B cell (primary cell): ENCODE measurements at regions of chr5 and their contacts with region 1.

Region 1: DNA sequence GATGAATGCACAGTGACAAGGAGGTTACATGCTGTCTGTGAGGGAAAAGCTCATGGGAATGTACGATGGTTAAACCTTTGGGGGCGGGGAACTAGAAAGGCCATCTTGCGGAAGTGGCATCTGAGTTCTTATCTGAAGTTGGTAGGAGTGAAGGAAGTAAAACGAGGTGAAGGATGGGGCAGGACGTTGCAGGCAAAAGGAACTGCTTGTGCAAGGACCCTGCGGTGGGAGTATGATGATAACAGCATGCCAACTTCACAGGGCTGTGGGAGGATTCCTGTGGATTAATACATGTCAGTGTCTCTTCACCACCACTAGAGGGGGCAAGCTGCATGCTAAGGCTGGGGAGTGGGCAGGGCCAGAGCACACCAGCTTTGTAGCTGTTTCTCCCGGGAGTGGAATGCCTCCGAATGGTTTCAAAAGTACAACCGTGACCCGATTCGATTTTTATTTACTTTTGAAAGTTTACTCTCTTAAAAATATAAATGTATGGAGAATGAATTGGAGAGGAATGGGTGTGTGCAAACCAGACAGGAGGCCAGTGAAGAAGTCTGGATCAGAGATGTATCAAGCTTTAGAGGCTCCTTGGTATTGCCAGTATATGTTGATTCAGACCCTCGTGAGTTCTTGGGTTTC is 62.5 kb downstream of the CYFIP2 start:
- DNase-seq: peak; percentile 78
- ATAC-seq: peak; percentile 98
- H3K4me3 ChIP-seq: no peak overlapping the region
- H3K4me3 Mint-ChIP-seq: no peak overlapping the region
- H3K27ac ChIP-seq: no peak overlapping the region
- H3K27ac Mint-ChIP-seq: no peak overlapping the region
- H3K4me1 ChIP-seq: no peaks in the 10 kb centered on the region
- H3K4me1 Mint-ChIP-seq: peaks cover 6% of the 10 kb centered on the region
- H3K27me3 ChIP-seq: no peaks in the 10 kb centered on the region
- H3K27me3 Mint-ChIP-seq: no peaks in the 10 kb centered on the region
- CTCF ChIP-seq: peak; percentile 96

Region 2: GRCh38 chr5:157049605-157050004 is 278.8 kb before region 1 on chr5:
- CTCF ChIA-PET with region 1: no interaction called
- POLR2A ChIA-PET with region 1: no interaction called
- intact Hi-C with region 1: no loop called
- DNase-seq: no peak
- ATAC-seq: no peak
- H3K4me3 ChIP-seq: no peak overlapping the region
- H3K4me3 Mint-ChIP-seq: peak overlapping the region; percentile 4
- H3K27ac ChIP-seq: no peak overlapping the region
- H3K27ac Mint-ChIP-seq: no peak overlapping the region
- H3K4me1 ChIP-seq: peaks cover 0 to 5% of the 10 kb centered on the region in 2 donors
- H3K4me1 Mint-ChIP-seq: peaks cover 7% of the 10 kb centered on the region
- H3K27me3 ChIP-seq: no peaks in the 10 kb centered on the region
- H3K27me3 Mint-ChIP-seq: peaks cover 6% of the 10 kb centered on the region
- CTCF ChIP-seq: no peak

Region 3: DNA sequence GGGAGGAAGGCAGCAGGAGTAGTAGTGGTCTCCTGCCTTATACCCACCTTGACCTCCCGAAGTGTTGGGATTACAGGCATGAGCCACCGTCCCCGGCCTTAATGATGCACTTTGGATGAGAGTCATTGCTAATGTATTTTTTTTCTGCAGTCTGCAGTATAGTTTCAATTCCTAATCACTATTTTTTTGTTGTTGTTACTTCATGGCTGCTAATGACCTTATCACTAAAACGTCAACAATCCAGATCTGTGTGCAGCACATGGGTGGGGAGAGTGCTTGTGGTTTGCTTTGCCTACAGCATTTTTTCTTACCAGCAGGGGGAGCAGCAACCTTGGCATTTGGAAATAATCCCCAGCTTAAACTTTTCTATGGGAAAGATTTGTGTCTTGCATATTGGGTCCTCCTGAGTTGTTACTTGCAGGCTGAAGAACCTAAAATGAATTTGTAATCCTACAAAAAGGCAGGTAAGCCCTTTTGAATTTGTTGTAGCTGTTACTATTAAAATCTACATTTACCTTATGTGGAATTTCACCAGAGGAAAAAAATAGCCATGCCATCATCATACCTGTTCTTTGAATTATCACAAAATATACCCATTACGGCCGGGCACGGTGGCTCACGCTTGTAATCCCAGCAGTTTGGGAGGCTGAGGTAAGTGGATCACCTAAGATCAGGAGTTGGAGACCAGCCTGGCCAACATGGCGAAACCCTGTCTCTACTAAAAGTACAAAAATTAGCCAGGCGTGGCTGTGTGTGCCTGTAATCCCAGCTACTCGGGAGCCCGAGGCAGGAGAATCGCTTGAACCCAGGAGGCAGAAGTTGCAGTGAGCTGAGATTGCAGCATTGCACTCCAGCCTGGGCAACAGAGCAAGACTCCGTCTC is 179.4 kb before region 1 on chr5:
- CTCF ChIA-PET with region 1: interaction called, 14 read pairs
- POLR2A ChIA-PET with region 1: no interaction called
- intact Hi-C with region 1: no loop called
- DNase-seq: peak; percentile 80
- ATAC-seq: peak; percentile 81
- H3K4me3 ChIP-seq: no peak overlapping the region
- H3K4me3 Mint-ChIP-seq: no peak overlapping the region
- H3K27ac ChIP-seq: no peak overlapping the region
- H3K27ac Mint-ChIP-seq: no peak overlapping the region
- H3K4me1 ChIP-seq: peaks cover 2 to 5% of the 10 kb centered on the region in 2 donors
- H3K4me1 Mint-ChIP-seq: peaks cover 5% of the 10 kb centered on the region
- H3K27me3 ChIP-seq: no peaks in the 10 kb centered on the region
- H3K27me3 Mint-ChIP-seq: no peaks in the 10 kb centered on the region
- CTCF ChIP-seq: peak; percentile 97

Region 4: DNA sequence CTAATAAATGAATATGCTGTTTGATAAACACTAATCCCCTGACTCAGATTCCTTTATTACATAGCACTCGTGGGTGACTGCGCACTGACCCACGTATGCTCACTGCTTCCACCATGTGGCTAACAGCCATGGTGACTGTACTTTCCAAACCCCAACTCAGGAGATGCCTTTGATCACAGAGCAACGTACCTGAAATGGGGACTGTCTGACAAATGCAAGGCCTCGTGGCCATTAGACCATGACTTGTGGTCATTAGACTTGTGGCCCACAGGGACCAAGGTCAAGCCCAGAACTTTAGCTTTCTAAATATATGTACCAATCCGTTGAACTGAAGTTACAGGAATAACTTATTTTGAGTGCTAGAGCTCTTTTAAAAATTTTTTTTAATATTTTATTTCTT is 15.9 kb before region 1 on chr5:
- CTCF ChIA-PET with region 1: interaction called, 22 read pairs
- POLR2A ChIA-PET with region 1: no interaction called
- intact Hi-C with region 1: no loop called
- DNase-seq: peak; percentile 79
- ATAC-seq: peak; percentile 84
- H3K4me3 ChIP-seq: no peak overlapping the region
- H3K4me3 Mint-ChIP-seq: no peak overlapping the region
- H3K27ac ChIP-seq: peak overlapping the region; percentile 13 to 53
- H3K27ac Mint-ChIP-seq: peak overlapping the region; percentile 70
- H3K4me1 ChIP-seq: peaks cover 5 to 26% of the 10 kb centered on the region in 2 donors
- H3K4me1 Mint-ChIP-seq: peaks cover 30% of the 10 kb centered on the region
- H3K27me3 ChIP-seq: no peaks in the 10 kb centered on the region
- H3K27me3 Mint-ChIP-seq: no peaks in the 10 kb centered on the region
- CTCF ChIP-seq: peak; percentile 84

Region 5: DNA sequence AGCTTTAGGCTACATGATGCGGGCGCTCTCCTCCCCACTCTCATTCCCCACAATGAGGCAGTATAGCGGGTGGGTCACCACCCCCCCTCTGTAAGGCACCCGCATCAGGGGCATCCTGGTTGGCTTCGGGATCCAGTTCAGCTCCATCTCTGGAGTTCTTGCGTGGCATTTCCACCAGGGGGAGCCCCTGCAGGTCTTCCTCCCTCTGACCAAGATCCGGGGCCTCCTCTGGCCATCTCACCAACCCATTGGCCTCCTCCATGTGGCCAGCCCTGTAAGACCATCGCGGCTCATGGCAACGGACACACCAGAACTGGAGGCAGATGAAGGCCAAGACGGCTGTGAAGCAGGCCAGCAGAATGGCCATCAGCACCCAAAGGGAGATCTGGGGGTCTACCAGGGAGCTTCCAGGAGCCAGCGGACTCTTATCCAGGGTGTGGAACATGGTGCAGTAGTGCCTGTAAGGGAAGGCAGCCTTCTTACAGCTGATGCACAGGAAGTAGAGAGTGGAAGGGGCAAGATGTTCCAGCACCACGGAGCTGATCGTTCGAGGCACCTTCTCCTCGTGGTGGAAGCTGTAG is 14.5 kb after region 1 on chr5:
- CTCF ChIA-PET with region 1: interaction called, 46 read pairs
- POLR2A ChIA-PET with region 1: no interaction called
- intact Hi-C with region 1: no loop called
- DNase-seq: peak; percentile 52
- ATAC-seq: peak; percentile 49
- H3K4me3 ChIP-seq: no peak overlapping the region
- H3K4me3 Mint-ChIP-seq: no peak overlapping the region
- H3K27ac ChIP-seq: no peak overlapping the region
- H3K27ac Mint-ChIP-seq: no peak overlapping the region
- H3K4me1 ChIP-seq: no peaks in the 10 kb centered on the region
- H3K4me1 Mint-ChIP-seq: no peaks in the 10 kb centered on the region
- H3K27me3 ChIP-seq: no peaks in the 10 kb centered on the region
- H3K27me3 Mint-ChIP-seq: no peaks in the 10 kb centered on the region
- CTCF ChIP-seq: peak; percentile 70